Gastrocnemius medialis (tissue), 4 donors: ENCODE measurements at regions of chr4 and their contacts with region 1.

Region 1: GRCh38 chr4:168831919-168832762 is 177.9 kb downstream of the CBR4 start:
- DNase-seq: peak; percentile 80 to 84
- ATAC-seq: peak; percentile 87 to 90
- H3K4me3 ChIP-seq: peak overlapping the region; percentile 74 to 96 (median 82)
- H3K27ac ChIP-seq: peak overlapping the region; percentile 83 to 92 (median 89)
- H3K4me1 ChIP-seq: peaks cover 29 to 30% of the 10 kb centered on the region in 2 donors
- H3K27me3 ChIP-seq: no peaks in the 10 kb centered on the region
- CTCF ChIP-seq: peak in 1 of 5 experiments; percentile 13
- POLR2A ChIP-seq: peak; percentile 90 to 92

Region 2: GRCh38 chr4:168585168-168586091 is 246.7 kb before region 1 on chr4:
- in situ Hi-C with region 1: no loop called
- intact Hi-C with region 1: loop called (anchors 5 kb)
- DNase-seq: peak; percentile 49 to 83
- ATAC-seq: peak; percentile 87 to 93
- H3K4me3 ChIP-seq: no peak overlapping the region
- H3K27ac ChIP-seq: peak overlapping the region in 1 of 4 donors; percentile 44
- H3K4me1 ChIP-seq: peaks cover 20 to 21% of the 10 kb centered on the region in 2 donors
- H3K27me3 ChIP-seq: no peaks in the 10 kb centered on the region
- CTCF ChIP-seq: peak; percentile 61 to 79 (median 71)
- POLR2A ChIP-seq: no peak

Region 3: GRCh38 chr4:168710353-168710946 is 121.7 kb before region 1 on chr4:
- in situ Hi-C with region 1: loop called in 1 of 4 experiments (anchors 10 kb)
- intact Hi-C with region 1: loop called (anchors 5 kb)
- DNase-seq: peak; percentile 17 to 43
- ATAC-seq: peak; percentile 66 to 74
- H3K4me3 ChIP-seq: no peak overlapping the region
- H3K27ac ChIP-seq: peak overlapping the region; percentile 29 to 72 (median 58)
- H3K4me1 ChIP-seq: peaks cover 24 to 26% of the 10 kb centered on the region in 2 donors
- H3K27me3 ChIP-seq: no peaks in the 10 kb centered on the region
- CTCF ChIP-seq: peak; percentile 48 to 75 (median 66)
- POLR2A ChIP-seq: no peak

Region 4: GRCh38 chr4:168886351-168886750 is 54.2 kb after region 1 on chr4:
- in situ Hi-C with region 1: no loop called
- intact Hi-C with region 1: loop called (anchors 2 kb)
- DNase-seq: peak in 1 of 2 donors; percentile 41
- ATAC-seq: peak; percentile 46 to 74
- H3K4me3 ChIP-seq: no peak overlapping the region
- H3K27ac ChIP-seq: peak overlapping the region; percentile 43 to 75 (median 52)
- H3K4me1 ChIP-seq: peaks cover 33 to 60% of the 10 kb centered on the region in 2 donors
- H3K27me3 ChIP-seq: no peaks in the 10 kb centered on the region
- CTCF ChIP-seq: no peak
- POLR2A ChIP-seq: no peak

Region 5: DNA sequence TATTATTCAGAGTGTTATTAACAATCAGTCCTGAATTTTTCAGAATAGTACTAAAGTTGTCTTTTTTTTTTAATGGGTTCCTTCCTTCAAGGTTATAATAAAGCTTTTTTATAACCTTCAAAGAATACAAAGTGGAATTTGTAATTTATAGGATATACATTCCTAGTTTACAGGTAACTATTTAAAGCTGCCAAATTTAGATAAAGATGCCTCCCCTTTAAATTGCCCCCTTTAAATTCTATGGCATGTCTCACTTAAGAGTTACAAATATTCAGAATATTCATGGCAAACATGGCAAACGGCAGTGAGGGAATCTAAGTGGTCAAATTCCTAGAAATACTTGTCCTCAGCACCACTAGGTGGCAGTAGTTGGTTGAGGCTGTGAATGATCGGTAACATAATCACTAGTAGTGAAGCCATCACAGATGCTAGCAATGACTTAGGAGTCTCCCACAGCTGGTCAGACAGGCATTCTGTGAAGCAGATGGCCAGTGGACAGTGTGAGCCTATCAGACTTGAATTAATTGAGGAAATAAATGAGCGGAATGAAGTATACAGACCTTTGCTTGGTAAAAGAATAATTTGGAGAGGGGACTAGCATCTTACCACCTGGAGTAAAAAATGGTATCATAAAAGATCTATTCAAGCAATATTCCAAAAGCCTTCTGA is 91.5 kb after region 1 on chr4:
- in situ Hi-C with region 1: loop called in 1 of 4 experiments (anchors 5 kb)
- intact Hi-C with region 1: loop called (anchors 5 kb)
- DNase-seq: peak in 1 of 2 donors; percentile 25
- ATAC-seq: peak; percentile 45 to 78
- H3K4me3 ChIP-seq: no peak overlapping the region
- H3K27ac ChIP-seq: no peak overlapping the region
- H3K4me1 ChIP-seq: peaks cover 0 to 6% of the 10 kb centered on the region in 2 donors
- H3K27me3 ChIP-seq: no peaks in the 10 kb centered on the region
- CTCF ChIP-seq: peak; percentile 71 to 80 (median 73)
- POLR2A ChIP-seq: no peak